Activated CD8-positive, alpha-beta memory T cell treated with anti-CD3 and anti-CD28 coated beads, Interleukin-2, amount 10 ng/mL, durations not matched to agents 7 days and 5 days (primary cell): ENCODE measurements at regions of chr11 and their contacts with region 1.

Region 1: DNA sequence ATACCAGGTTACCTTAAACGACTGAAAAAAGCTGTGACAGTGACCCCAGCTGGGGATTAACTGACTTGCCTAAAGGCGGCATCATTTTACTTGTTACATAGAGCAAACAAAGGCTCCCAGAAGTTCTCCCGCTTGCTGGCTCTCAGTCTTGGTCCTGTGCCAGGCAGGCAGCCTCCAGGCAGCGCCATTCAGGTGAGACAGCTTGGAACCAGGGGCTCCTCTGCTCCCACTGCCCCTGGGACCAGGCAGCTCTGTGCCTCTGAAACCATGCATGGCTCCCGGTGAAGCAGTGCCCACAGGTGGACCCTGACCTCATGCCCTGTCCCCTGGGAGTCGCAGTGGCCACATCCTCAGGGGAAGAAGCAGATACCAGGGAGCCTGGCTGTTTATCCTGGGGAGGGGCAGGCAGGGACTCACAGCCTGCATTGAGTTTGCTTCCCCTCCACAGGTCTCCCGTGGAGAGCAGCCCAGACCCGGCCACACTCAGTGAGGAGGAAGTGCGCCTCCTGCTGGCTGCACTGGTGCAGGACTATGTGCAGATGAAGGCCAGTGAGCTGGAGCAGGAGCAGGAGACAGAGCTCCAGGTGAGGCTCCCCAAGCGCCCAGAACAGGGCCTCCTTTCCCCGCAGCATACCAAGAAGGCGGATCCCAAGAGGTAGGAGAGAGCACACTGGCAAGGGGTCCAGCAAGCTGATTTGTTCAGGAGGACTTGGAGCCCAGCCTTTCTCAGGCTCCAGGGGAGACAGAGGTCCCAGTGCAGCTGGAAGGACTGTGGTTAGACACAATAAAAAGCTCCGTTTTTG is 15.6 kb upstream of the CYP2R1 start:
- DNase-seq: peak; percentile 89
- ATAC-seq: peak; percentile 58
- H3K4me3 Mint-ChIP-seq: no peak overlapping the region
- H3K27ac Mint-ChIP-seq: peak overlapping the region; percentile 69
- H3K4me1 Mint-ChIP-seq: peaks cover 50% of the 10 kb centered on the region
- H3K27me3 Mint-ChIP-seq: no peaks in the 10 kb centered on the region

Region 2: GRCh38 chr11:14499554-14500180 is 407.9 kb before region 1 on chr11 and contains the start of gene COPB1:
- CTCF ChIA-PET with region 1: interaction called, 22 read pairs
- DNase-seq: peak; percentile 97
- ATAC-seq: peak; percentile 92
- H3K4me3 Mint-ChIP-seq: peak within 1 kb of the TSS; percentile 79
- H3K27ac Mint-ChIP-seq: peak within 1 kb of the TSS; percentile 97
- H3K4me1 Mint-ChIP-seq: peaks cover 36% of the 10 kb centered on the region
- H3K27me3 Mint-ChIP-seq: no peaks in the 10 kb centered on the region
- total RNA-seq, gene COPB1: 74.7 to 106 TPM

Region 3: DNA sequence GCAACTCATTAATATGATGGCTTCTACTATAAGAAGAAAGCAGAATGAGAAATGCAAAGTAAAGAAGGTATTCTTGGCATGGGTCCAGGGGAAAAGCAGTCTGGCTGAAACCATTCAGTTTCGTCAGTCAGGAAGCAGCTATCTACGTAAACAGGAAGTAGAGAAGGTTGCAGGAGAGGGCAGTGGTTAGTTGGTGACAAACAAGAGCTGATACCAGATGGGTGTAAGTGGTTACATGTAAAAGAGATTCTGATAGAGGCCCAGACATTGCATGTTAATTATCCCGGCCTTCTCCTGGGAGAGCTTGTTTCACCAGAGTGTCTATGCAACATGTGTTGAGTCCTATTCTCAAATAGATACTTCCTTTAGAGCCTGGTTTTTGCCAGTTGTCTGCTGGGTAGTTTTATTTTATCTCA is 329.1 kb before region 1 on chr11:
- CTCF ChIA-PET with region 1: interaction called, 10 read pairs
- DNase-seq: peak; percentile 87
- ATAC-seq: peak; percentile 93
- H3K4me3 Mint-ChIP-seq: peak overlapping the region; percentile 55
- H3K27ac Mint-ChIP-seq: peak overlapping the region; percentile 96
- H3K4me1 Mint-ChIP-seq: peaks cover 53% of the 10 kb centered on the region
- H3K27me3 Mint-ChIP-seq: no peaks in the 10 kb centered on the region

Region 4: DNA sequence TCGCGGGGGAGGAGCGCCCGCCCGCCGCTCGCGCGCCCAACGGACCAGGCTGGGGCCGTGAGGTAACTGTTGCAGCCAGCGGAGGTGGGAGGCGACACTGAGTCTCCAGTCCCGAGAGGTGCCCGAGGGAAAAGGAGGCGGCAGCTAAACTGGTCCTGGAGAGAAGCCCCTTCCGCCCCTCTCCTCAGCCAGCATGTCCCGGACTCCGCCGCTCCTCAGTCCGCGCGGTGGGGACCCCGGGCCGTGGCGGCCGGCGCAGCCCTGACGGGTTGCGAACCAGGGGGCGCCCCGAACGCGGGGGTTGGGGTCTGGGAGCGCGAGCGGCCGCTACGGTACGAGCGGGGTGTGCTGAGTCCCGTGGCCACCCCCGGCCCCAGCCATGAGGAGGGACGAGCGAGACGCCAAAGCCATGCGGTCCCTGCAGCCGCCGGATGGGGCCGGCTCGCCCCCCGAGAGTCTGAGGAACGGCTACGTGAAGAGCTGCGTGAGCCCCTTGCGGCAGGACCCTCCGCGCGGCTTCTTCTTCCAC is 263.9 kb before region 1 on chr11 and contains the start of gene PDE3B:
- CTCF ChIA-PET with region 1: interaction called, 43 read pairs
- DNase-seq: peak; percentile 91
- ATAC-seq: peak; percentile 78
- H3K4me3 Mint-ChIP-seq: peak within 1 kb of the TSS; percentile 85
- H3K27ac Mint-ChIP-seq: peak within 1 kb of the TSS; percentile 89
- H3K4me1 Mint-ChIP-seq: peaks cover 46% of the 10 kb centered on the region
- H3K27me3 Mint-ChIP-seq: no peaks in the 10 kb centered on the region
- total RNA-seq, gene PDE3B: 81.3 to 92.2 TPM

Region 5: GRCh38 chr11:14892036-14892567 is 15.5 kb before region 1 on chr11 and contains the start of gene CYP2R1:
- CTCF ChIA-PET with region 1: interaction called, 106 read pairs
- DNase-seq: peak; percentile 97
- ATAC-seq: peak; percentile 95
- H3K4me3 Mint-ChIP-seq: peak within 1 kb of the TSS; percentile 92
- H3K27ac Mint-ChIP-seq: peak within 1 kb of the TSS; percentile 93
- H3K4me1 Mint-ChIP-seq: peaks cover 49% of the 10 kb centered on the region
- H3K27me3 Mint-ChIP-seq: no peaks in the 10 kb centered on the region
- total RNA-seq, gene CYP2R1: 11.7 to 16.6 TPM

Region 6: GRCh38 chr11:15006139-15006759 is 98.6 kb after region 1 on chr11:
- CTCF ChIA-PET with region 1: interaction called, 94 read pairs
- DNase-seq: no peak
- ATAC-seq: peak; percentile 64
- H3K4me3 Mint-ChIP-seq: no peak overlapping the region
- H3K27ac Mint-ChIP-seq: no peak overlapping the region
- H3K4me1 Mint-ChIP-seq: no peaks in the 10 kb centered on the region
- H3K27me3 Mint-ChIP-seq: peaks cover 53% of the 10 kb centered on the region

Region 7: GRCh38 chr11:15093432-15093831 is 185.8 kb after region 1 on chr11:
- CTCF ChIA-PET with region 1: interaction called, 19 read pairs
- DNase-seq: no peak
- ATAC-seq: no peak
- H3K4me3 Mint-ChIP-seq: no peak overlapping the region
- H3K27ac Mint-ChIP-seq: no peak overlapping the region
- H3K4me1 Mint-ChIP-seq: peaks cover 18% of the 10 kb centered on the region
- H3K27me3 Mint-ChIP-seq: peaks cover 21% of the 10 kb centered on the region